H1 (cell line): ENCODE measurements at regions of chr9 and their contacts with region 1.

Region 1: GRCh38 chr9:35553670-35554543 is 51.2 kb upstream of the TESK1 start:
- DNase-seq: peak in 1 of 2 experiments; percentile 72
- H3K4me3 ChIP-seq: no peak overlapping the region
- H3K27ac ChIP-seq: no peak overlapping the region
- H3K4me1 ChIP-seq: peaks cover 0 to 4% (median 0%) of the 10 kb centered on the region in 4 experiments; a peak in 2 of 7 replicates
- H3K27me3 ChIP-seq: no peaks in the 10 kb centered on the region
- CTCF ChIP-seq: peak; percentile 68 to 97 (median 92)
- EP300 ChIP-seq: no peak
- POLR2A ChIP-seq: no peak
- RAD21 ChIP-seq: peak; percentile 99 to 100

Region 2: DNA sequence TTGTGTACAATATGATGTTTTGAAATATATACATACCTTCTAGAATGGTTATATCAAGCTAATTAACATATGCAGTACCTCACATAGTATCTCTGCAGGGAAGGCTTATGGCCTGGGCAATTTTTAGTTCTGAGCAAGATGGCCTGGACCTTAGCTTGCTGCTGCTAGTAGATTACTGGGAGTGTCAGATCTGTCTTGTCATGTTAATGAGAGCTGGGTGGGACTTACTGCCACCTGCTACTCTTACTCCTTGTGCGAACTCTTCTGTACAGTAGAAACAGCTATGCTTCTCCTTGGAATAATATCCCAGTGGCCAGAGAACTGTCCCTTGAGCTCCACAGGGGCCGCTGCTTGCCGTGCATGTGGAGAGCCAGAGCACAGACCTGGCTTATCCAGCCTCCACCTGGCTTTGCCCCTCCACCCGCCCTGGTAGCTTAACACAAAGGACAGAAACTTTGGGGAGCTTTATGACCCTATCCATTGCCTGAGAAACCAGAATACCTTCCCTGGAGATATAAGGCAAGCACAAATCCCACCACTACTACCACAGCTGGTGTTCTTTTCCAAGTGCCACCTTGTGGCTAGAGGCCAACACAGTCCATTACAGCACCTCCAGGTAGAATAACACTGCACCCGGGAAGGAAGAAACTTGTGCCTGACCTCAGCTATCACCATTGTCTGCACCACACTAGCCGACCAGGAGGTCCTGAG is 138.4 kb before region 1 on chr9:
- CTCF ChIA-PET with region 1: interaction called, 10 read pairs
- POLR2A ChIA-PET with region 1: interaction called, 3 read pairs
- DNase-seq: peak in 1 of 2 experiments; percentile 52
- H3K4me3 ChIP-seq: no peak overlapping the region
- H3K27ac ChIP-seq: no peak overlapping the region
- H3K4me1 ChIP-seq: peaks cover 0 to 4% (median 1%) of the 10 kb centered on the region in 4 experiments; a peak in 4 of 7 replicates
- H3K27me3 ChIP-seq: no peaks in the 10 kb centered on the region
- CTCF ChIP-seq: peak; percentile 36 to 70 (median 66)
- EP300 ChIP-seq: no peak
- POLR2A ChIP-seq: no peak
- RAD21 ChIP-seq: peak; percentile 47 to 67

Region 3: GRCh38 chr9:35470894-35471293 is 83.0 kb before region 1 on chr9:
- CTCF ChIA-PET with region 1: interaction called, 181 read pairs
- POLR2A ChIA-PET with region 1: no interaction called
- DNase-seq: no peak
- H3K4me3 ChIP-seq: no peak overlapping the region
- H3K27ac ChIP-seq: no peak overlapping the region
- H3K4me1 ChIP-seq: no peaks in the 10 kb centered on the region
- H3K27me3 ChIP-seq: no peaks in the 10 kb centered on the region
- CTCF ChIP-seq: no peak
- EP300 ChIP-seq: no peak
- POLR2A ChIP-seq: no peak
- RAD21 ChIP-seq: no peak

Region 4: DNA sequence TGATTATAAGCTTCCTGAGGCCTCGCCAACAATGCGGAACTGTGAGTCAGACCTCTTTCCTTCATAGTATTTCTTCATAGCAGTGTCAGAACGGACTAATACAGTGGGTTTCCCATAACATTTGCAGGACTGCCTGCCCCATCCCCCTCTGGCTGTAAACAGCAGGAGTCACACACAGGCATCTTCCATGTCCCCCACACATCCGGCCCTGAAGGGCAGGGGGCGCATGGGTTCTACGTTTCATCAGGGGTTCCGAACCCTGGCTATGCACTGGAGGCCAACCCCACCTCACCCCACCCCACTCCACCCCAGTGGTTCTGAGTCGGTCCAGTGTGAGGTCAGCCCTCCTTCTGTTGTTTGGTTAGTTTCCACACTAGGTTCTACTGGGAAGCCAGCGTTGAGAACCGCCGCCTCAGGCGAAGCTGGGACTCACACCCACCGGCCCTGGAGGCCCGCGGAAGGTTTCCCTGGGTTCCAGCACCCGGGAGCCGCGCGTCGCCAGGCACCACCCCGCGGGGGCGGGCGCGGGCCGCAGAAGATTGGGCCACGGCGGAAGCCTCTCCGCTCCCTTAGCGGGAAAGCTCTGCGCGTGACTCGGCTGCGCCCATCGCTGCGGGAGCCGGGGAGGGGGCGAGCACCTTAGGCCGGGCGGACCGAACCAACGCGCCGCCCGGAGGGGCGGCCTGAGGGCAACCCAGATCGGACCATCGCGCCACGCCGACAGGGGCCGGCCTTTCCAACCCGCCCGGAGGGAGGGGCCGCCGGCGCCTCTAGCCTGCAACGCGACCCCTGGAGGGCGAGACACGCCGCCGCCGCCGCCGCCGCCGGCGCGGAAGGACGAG is 64.4 kb before region 1 on chr9 and contains the start of gene RUSC2:
- CTCF ChIA-PET with region 1: interaction called, 66 read pairs
- POLR2A ChIA-PET with region 1: interaction called, 7 read pairs
- DNase-seq: peak; percentile 61 to 93
- H3K4me3 ChIP-seq: peak within 1 kb of the TSS; percentile 71 to 87 (median 74)
- H3K27ac ChIP-seq: peak within 1 kb of the TSS; percentile 60; the same call in 1 of the 2 replicates
- H3K4me1 ChIP-seq: peaks cover 0 to 8% (median 4%) of the 10 kb centered on the region in 4 experiments; a peak in 4 of 7 replicates
- H3K27me3 ChIP-seq: peaks cover 0 to 5% (median 0%) of the 10 kb centered on the region in 4 experiments; a peak in 1 of 7 replicates
- CTCF ChIP-seq: peak; percentile 57 to 60 (median 59)
- EP300 ChIP-seq: peak in 1 of 2 experiments; percentile 98; a peak in 2 of 3 replicates
- POLR2A ChIP-seq: peak in 1 of 2 experiments; percentile 84; a peak in 2 of 3 replicates
- RAD21 ChIP-seq: peak; percentile 67
- total RNA-seq, gene RUSC2: 6.8 and 7.9 TPM in 2 replicates

Region 5: DNA sequence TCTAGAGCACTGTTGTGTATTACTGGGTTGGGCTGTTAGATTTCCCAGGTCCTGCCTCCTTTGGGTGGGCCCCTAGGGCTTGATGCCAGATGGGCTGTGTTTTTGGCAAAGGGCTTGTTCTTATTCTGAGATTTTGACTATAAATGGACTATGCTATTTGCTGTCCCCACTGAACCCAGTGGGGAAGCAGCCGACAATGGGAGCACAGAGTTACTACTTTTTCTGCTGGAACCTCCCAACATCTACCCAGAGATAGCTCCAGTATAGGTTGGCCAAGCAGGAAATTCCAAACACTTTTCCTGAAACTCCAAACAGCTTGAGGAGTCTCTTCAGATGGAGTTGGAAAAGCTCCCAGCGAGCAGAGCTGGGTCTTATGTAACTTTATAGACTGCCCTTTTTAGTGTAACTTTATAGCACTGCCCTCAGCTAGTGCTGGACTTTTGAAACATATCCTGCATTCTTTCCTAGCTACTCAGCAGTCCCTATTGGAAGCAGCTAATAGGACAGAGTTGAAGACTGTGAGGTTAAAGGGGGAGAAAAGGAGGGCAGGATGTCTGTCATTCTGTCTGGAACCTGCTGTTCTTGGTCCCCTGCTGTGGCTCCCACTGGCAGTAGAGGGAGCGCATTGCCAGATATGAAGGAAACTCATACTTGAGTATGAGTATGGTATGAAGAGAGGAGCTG is 43.0 kb before region 1 on chr9:
- CTCF ChIA-PET with region 1: interaction called, 114 read pairs
- POLR2A ChIA-PET with region 1: interaction called, 3 read pairs
- DNase-seq: no peak
- H3K4me3 ChIP-seq: no peak overlapping the region
- H3K27ac ChIP-seq: no peak overlapping the region
- H3K4me1 ChIP-seq: peaks cover 0 to 4% (median 0%) of the 10 kb centered on the region in 4 experiments; a peak in 1 of 7 replicates
- H3K27me3 ChIP-seq: no peaks in the 10 kb centered on the region
- CTCF ChIP-seq: no peak
- EP300 ChIP-seq: no peak
- POLR2A ChIP-seq: no peak
- RAD21 ChIP-seq: no peak

Region 6: DNA sequence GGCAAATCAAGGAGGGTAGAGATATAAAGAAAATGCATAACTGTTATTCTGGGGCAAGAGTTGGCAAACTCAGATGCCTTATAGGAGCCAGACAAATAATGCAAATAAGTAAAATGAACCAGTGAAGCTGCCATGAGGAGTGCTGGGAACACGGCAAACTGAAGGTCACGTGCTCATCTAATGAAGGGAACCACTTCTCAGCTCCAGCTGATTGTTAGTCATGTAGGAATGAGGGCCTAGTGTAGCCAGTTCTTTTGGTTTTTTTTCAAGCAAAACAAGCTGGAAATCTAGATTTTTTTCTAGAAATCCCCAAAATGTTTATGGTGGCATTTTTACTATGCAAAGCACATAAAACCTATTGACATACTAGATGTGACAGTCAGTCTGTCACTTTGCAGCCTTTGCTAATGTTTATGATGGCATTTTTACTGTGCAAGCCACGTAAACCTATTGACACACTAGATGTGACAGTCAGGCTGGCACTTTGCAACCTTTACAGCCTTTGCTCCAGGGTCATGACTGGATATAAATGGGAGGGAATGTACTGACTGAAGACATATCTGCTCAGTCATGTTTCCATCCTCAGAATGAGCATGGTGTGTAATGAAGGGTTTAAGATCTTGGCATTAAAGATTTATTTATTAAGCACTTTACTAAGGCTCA is 24.6 kb before region 1 on chr9:
- CTCF ChIA-PET with region 1: interaction called, 26 read pairs
- POLR2A ChIA-PET with region 1: no interaction called
- DNase-seq: no peak
- H3K4me3 ChIP-seq: no peak overlapping the region
- H3K27ac ChIP-seq: no peak overlapping the region
- H3K4me1 ChIP-seq: no peaks in the 10 kb centered on the region
- H3K27me3 ChIP-seq: no peaks in the 10 kb centered on the region
- CTCF ChIP-seq: no peak
- EP300 ChIP-seq: no peak
- POLR2A ChIP-seq: no peak
- RAD21 ChIP-seq: no peak

Region 7: GRCh38 chr9:35603987-35604577 is 50.2 kb after region 1 on chr9:
- CTCF ChIA-PET with region 1: interaction called, 10 read pairs
- POLR2A ChIA-PET with region 1: no interaction called
- DNase-seq: peak; percentile 98 to 100
- H3K4me3 ChIP-seq: peak overlapping the region; percentile 55 to 76 (median 66)
- H3K27ac ChIP-seq: no peak overlapping the region
- H3K4me1 ChIP-seq: peaks cover 0 to 15% (median 9%) of the 10 kb centered on the region in 4 experiments; a peak in 6 of 7 replicates
- H3K27me3 ChIP-seq: no peaks in the 10 kb centered on the region
- CTCF ChIP-seq: peak; percentile 77 to 86 (median 84)
- EP300 ChIP-seq: no peak; a peak in 1 of 3 replicates
- POLR2A ChIP-seq: peak in 1 of 2 experiments; percentile 60; a peak in 2 of 3 replicates
- RAD21 ChIP-seq: peak; percentile 55 to 70

Region 8: DNA sequence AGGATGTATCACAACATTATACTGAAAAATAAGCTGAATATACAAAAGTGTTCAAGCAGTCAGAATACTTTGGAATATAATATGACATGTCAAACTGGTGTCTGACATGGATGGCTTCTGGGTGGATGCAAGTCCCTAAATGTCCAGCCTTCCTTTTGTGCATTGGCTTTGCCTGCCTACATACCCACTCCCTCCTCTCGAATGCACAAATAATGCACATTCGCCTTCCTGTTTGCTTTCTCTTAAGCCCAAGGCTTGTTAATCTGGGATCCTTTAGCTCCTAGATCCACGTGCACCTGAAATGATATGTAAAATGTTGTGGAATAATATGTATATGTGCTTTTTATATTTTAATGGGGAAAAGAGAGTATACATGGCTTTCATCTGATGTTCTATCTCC is 224.6 kb after region 1 on chr9:
- CTCF ChIA-PET with region 1: no interaction called
- POLR2A ChIA-PET with region 1: no interaction called
- DNase-seq: no peak
- H3K4me3 ChIP-seq: no peak overlapping the region
- H3K27ac ChIP-seq: no peak overlapping the region
- H3K4me1 ChIP-seq: peaks cover 0 to 6% (median 4%) of the 10 kb centered on the region in 4 experiments; a peak in 6 of 7 replicates
- H3K27me3 ChIP-seq: no peaks in the 10 kb centered on the region
- CTCF ChIP-seq: no peak
- EP300 ChIP-seq: no peak
- POLR2A ChIP-seq: no peak
- RAD21 ChIP-seq: no peak